ENCODE measurements at regions of chr20 and their contacts with region 1.

Region 1: DNA sequence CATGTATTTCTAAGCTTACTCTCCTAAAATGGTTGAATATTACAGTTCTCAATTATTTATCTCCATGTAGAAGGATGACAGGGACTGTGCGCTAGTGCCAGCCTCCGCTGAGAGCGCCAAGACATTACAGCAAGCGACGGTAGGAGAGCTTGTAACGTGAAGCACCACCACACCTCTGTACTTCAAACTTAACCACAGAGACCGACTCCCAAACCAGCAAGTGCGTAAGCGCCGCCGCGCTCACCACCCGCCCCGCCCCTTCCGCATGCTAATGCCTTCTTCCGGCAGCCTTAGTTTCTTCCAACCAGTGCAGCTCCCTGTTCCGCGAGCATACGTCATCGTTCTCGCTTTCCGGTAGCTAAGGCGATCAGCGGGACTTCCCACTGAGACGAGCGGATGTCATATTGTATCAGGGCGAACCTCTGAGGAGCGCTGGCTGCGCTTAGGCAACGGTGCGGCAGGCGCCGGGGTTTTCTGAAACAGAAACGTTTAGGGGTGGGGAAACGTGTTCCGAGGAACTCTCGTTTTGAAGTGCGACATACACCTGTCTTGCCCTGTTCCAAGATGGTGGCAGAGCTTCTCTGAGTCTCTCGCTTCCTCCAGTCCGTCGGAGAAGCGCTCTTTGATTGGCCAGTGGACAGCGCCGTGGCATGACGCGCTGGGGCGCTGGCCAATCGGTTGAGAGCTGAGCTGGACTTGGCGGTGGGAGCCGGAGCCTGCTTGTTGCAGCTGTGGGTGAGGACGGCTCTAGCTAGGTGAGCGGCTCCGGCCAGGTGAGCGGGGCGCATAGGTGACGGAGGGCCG is at the start of gene SEC23B:
- DNase-seq: peak; percentile 88 to 100 (median 99)
- ATAC-seq: peak; percentile 91
- H3K4me3 ChIP-seq: peak within 1 kb of the TSS; percentile 74
- H3K4me3 Mint-ChIP-seq: peak within 1 kb of the TSS; percentile 91 to 100 (median 100)
- H3K27ac ChIP-seq: peak within 1 kb of the TSS; percentile 90
- H3K27ac Mint-ChIP-seq: peak within 1 kb of the TSS; percentile 99 to 100 (median 100)
- H3K4me1 ChIP-seq: peaks cover 17 to 28% of the 10 kb centered on the region in 2 donors
- H3K4me1 Mint-ChIP-seq: peaks cover 25 to 59% (median 50%) of the 10 kb centered on the region in 7 donors
- H3K27me3 ChIP-seq: no peaks in the 10 kb centered on the region
- H3K27me3 Mint-ChIP-seq: peaks cover 0 to 2% (median 0%) of the 10 kb centered on the region in 5 donors
- total RNA-seq, gene SEC23B: 39.0 to 102 (median 40.9) TPM

Region 2: DNA sequence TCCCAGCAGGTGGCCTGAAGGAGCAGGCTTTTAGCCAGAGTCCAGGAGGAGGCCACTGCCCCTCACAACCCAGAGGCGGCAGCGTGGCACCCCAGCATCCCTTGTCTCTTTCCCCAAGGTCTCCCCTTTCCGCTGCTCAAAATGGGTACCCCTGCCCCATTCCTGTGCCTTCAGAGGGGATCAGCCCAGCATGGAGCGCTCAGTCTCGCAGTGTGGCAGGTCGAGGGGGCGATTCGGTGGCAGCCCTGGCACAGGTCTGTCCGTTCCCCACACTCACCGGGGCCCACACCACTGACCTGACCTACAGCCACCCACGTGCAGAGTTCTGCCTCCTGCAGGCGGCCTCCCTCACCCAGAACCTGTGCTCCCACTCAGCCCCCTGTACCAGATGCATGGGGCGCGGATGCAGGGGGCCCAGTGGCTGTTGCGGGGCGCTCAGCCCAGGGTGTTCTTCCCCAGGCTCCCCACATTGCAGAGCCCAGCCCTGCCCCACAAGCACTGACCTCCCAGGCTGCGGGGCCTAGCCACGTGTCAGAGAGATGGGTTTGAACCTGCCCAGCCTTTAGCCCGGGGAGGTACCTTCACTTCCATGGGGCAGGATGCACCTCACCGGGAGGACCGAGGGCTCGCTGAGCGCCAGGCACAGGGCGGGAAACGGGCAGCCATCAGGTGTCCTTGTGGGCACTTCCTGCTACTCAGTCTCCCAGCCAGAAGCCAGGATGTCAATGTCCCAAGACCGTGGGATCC is 895.7 kb before region 1 on chr20:
- CTCF ChIA-PET with region 1: no interaction called
- POLR2A ChIA-PET with region 1: no interaction called
- intact Hi-C with region 1: loop called in 1 of 2 experiments (anchors 2 kb)
- DNase-seq: peak in 4 of 9 donors; percentile 7 to 30 (median 20)
- ATAC-seq: no peak
- H3K4me3 ChIP-seq: peak overlapping the region; percentile 36
- H3K4me3 Mint-ChIP-seq: peak overlapping the region in 8 of 10 donors; percentile 23 to 85 (median 68)
- H3K27ac ChIP-seq: peak overlapping the region; percentile 60
- H3K27ac Mint-ChIP-seq: peak overlapping the region; percentile 85 to 98 (median 95)
- H3K4me1 ChIP-seq: peaks cover 39 to 40% of the 10 kb centered on the region in 2 donors
- H3K4me1 Mint-ChIP-seq: peaks cover 20 to 53% (median 40%) of the 10 kb centered on the region in 7 donors
- H3K27me3 ChIP-seq: no peaks in the 10 kb centered on the region
- H3K27me3 Mint-ChIP-seq: no peaks in the 10 kb centered on the region

Region 3: DNA sequence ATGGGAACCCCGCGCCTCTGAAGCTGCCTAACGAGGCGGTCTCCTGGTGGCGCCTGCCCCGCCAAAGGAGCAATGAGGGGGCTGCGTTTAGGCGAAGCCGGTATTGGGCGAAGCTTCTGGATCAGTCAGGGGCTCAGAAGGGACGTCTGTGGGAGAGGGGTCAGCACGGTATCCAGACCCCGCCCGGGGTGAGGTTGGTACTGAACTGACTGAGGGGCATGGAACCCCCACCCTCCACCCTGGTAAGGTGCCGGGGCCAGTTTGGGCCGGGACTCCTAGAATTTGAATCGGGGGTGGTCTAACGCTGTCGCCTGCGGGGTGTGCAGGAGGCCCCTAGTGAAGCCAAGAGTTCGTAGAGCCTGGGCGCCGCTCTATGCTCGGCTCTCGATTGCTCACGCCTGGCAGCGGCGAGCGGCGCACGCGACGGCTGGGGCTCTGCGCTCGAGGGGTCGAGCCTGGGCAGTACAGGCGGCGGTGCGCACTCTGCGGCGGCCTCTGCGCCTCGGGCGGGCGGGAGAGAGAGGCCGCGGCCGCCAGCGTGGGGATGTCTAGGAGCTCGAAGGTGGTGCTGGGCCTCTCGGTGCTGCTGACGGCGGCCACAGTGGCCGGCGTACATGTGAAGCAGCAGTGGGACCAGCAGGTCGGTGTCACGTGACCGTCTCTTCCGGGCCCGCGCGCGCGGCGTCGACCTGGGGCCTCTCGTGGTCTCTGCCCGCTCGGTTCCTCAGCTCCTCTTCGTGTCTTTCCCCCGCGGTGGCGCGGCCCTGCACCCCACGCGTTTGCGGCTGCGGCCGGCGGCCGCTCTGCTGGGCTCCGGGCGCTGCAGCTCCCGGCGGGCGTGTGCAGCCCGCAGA is 369.8 kb before region 1 on chr20 and contains the starts of genes KAT14 and PET117:
- CTCF ChIA-PET with region 1: no interaction called
- POLR2A ChIA-PET with region 1: interaction called, 5 read pairs
- intact Hi-C with region 1: loop called (anchors 1 to 2 kb)
- DNase-seq: peak; percentile 85 to 96 (median 93)
- ATAC-seq: peak; percentile 98
- H3K4me3 ChIP-seq: peak within 1 kb of the TSS; percentile 99
- H3K4me3 Mint-ChIP-seq: peak within 1 kb of the TSS; percentile 76 to 92 (median 88)
- H3K27ac ChIP-seq: peak within 1 kb of the TSS; percentile 89
- H3K27ac Mint-ChIP-seq: peak within 1 kb of the TSS; percentile 85 to 95 (median 92)
- H3K4me1 ChIP-seq: peaks cover 13 to 15% of the 10 kb centered on the region in 2 donors
- H3K4me1 Mint-ChIP-seq: peaks cover 23 to 44% (median 31%) of the 10 kb centered on the region in 7 donors
- H3K27me3 ChIP-seq: no peaks in the 10 kb centered on the region
- H3K27me3 Mint-ChIP-seq: peaks cover 0 to 7% (median 0%) of the 10 kb centered on the region in 5 donors
- total RNA-seq, gene KAT14: 12.3 to 26.7 (median 16.2) TPM
- total RNA-seq, gene PET117: 9.0 to 20.3 (median 11.7) TPM

Region 4: DNA sequence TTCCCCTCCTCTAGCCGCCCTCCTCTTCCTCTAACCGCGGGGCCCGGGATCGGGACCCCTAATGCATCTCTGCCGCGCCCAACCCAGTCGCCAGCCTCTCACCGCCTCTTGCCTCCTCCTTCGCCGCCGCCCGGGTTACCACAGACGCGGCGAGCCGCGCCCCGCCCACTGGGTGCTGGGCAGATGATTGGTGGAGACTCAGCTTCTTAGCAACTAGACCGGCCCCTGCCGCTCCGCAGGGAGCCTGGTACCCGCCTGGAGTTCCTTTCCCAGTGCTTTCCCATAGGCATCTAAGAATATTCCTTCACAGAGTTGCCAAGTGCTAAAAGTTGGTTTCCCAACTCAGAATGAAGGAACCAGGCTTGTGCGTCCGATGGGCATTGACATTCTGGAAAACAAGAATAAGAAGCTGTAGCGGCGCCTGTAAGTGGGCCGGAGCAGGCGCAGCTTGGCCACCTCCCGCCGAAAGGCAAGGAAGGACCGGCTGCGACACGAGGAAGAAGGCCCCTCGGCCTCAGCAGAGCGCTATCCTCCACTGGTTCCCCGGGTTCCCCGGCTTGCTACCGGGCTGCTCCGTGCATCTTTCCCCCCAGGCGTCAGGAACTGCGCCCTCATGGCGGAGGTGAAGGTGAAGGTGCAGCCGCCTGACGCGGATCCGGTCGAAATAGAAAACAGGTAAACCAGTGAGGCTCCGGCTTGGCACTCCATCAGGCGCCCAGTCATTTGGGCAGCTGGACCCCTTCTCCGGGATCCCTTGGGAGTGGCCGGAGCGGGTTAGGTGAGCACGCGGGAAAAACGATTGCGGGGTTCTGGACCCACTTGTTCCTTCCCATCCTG is 40.3 kb before region 1 on chr20 and contains the starts of genes DZANK1 and POLR3F:
- CTCF ChIA-PET with region 1: interaction called, 5 read pairs
- POLR2A ChIA-PET with region 1: interaction called, 79 read pairs
- intact Hi-C with region 1: loop called (anchors 1 kb)
- DNase-seq: peak; percentile 85 to 93 (median 92)
- ATAC-seq: peak; percentile 97
- H3K4me3 ChIP-seq: peak within 1 kb of the TSS; percentile 93
- H3K4me3 Mint-ChIP-seq: peak within 1 kb of the TSS; percentile 89 to 99 (median 97)
- H3K27ac ChIP-seq: peak within 1 kb of the TSS; percentile 77
- H3K27ac Mint-ChIP-seq: peak within 1 kb of the TSS; percentile 93 to 99 (median 98)
- H3K4me1 ChIP-seq: peaks cover 7 to 14% of the 10 kb centered on the region in 2 donors
- H3K4me1 Mint-ChIP-seq: peaks cover 25 to 44% (median 37%) of the 10 kb centered on the region in 7 donors
- H3K27me3 ChIP-seq: no peaks in the 10 kb centered on the region
- H3K27me3 Mint-ChIP-seq: no peaks in the 10 kb centered on the region
- total RNA-seq, gene DZANK1: 1.2 to 3.5 (median 2.9) TPM
- total RNA-seq, gene POLR3F: 5.0 to 13.5 (median 11.5) TPM

Region 5: GRCh38 chr20:18587665-18588573 is 80.5 kb after region 1 on chr20 and contains the start of gene DTD1:
- CTCF ChIA-PET with region 1: interaction called, 3 read pairs
- POLR2A ChIA-PET with region 1: interaction called, 15 read pairs
- intact Hi-C with region 1: loop called (anchors 1 kb)
- DNase-seq: peak; percentile 29 to 93 (median 53)
- ATAC-seq: peak; percentile 92
- H3K4me3 ChIP-seq: peak within 1 kb of the TSS; percentile 68
- H3K4me3 Mint-ChIP-seq: peak within 1 kb of the TSS; percentile 83 to 99 (median 91)
- H3K27ac ChIP-seq: peak within 1 kb of the TSS; percentile 74
- H3K27ac Mint-ChIP-seq: peak within 1 kb of the TSS; percentile 80 to 94 (median 91)
- H3K4me1 ChIP-seq: peaks cover 0 to 4% of the 10 kb centered on the region in 2 donors
- H3K4me1 Mint-ChIP-seq: peaks cover 16 to 39% (median 27%) of the 10 kb centered on the region in 7 donors
- H3K27me3 ChIP-seq: no peaks in the 10 kb centered on the region
- H3K27me3 Mint-ChIP-seq: peaks cover 0 to 11% (median 9%) of the 10 kb centered on the region in 5 donors
- total RNA-seq, gene DTD1: 12.7 to 24.4 (median 16.6) TPM

Region 6: GRCh38 chr20:19644085-19644484 is 1136.7 kb after region 1 on chr20:
- CTCF ChIA-PET with region 1: no interaction called
- POLR2A ChIA-PET with region 1: no interaction called
- intact Hi-C with region 1: no loop called
- DNase-seq: no peak
- ATAC-seq: no peak
- H3K4me3 ChIP-seq: no peak overlapping the region
- H3K4me3 Mint-ChIP-seq: no peak overlapping the region
- H3K27ac ChIP-seq: no peak overlapping the region
- H3K27ac Mint-ChIP-seq: no peak overlapping the region
- H3K4me1 ChIP-seq: no peaks in the 10 kb centered on the region
- H3K4me1 Mint-ChIP-seq: peaks cover 0 to 1% (median 0%) of the 10 kb centered on the region in 7 donors
- H3K27me3 ChIP-seq: no peaks in the 10 kb centered on the region
- H3K27me3 Mint-ChIP-seq: peaks cover 0 to 8% (median 0%) of the 10 kb centered on the region in 5 donors

Region 7: DNA sequence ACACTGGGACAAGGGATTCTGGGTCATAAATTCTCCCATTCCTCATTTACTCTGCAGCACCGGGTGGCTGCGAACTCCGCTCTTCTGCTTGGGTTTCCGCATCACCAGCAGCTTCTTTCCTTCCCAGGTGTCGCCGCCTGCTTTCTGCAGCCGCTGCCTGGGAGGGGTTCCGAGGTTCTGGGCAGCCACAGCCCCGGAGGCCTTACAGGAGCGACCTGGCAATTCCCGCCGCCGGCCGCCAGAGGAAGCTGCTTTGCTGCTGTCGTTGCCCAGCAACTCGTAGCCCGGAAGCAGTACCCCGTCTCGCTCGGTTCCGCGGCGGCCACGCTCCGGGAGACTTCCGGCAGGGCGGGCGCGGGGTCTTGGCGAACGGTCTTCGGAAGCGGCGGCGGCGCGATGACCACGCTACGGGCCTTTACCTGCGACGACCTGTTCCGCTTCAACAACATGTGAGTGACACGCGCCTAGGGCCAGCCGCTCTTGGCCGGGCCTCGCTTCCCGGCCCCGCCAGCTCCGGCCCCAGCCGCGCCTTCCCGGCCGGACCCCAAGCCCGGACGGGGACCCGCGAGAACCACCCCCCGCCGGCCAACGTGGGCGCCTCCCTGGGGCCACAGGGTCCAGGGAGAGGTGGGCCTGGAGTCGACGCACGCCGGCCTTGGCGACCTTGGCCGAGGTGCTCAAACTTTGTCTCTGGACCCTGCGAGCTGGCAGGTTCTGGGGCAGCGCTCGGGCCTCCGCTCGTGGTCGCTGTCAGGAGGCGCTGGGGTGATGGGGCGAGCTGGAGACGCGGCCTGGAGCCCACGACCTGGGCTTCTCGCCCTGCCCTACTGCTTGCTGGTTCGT is 1509.8 kb after region 1 on chr20 and contains the start of gene NAA20:
- CTCF ChIA-PET with region 1: no interaction called
- POLR2A ChIA-PET with region 1: no interaction called
- intact Hi-C with region 1: loop called in 1 of 2 experiments (anchors 1 kb)
- DNase-seq: peak; percentile 80 to 89 (median 87)
- ATAC-seq: peak; percentile 99
- H3K4me3 ChIP-seq: peak within 1 kb of the TSS; percentile 77
- H3K4me3 Mint-ChIP-seq: peak within 1 kb of the TSS; percentile 88 to 96 (median 93)
- H3K27ac ChIP-seq: peak within 1 kb of the TSS; percentile 83
- H3K27ac Mint-ChIP-seq: peak within 1 kb of the TSS; percentile 90 to 96 (median 94)
- H3K4me1 ChIP-seq: peaks cover 9 to 28% of the 10 kb centered on the region in 2 donors
- H3K4me1 Mint-ChIP-seq: peaks cover 38 to 68% (median 63%) of the 10 kb centered on the region in 7 donors
- H3K27me3 ChIP-seq: no peaks in the 10 kb centered on the region
- H3K27me3 Mint-ChIP-seq: no peaks in the 10 kb centered on the region
- total RNA-seq, gene NAA20: 21.5 to 52.6 (median 28.3) TPM